GM10248 (cell line): ENCODE measurements at regions of chr16 and their contacts with region 1.

Region 1: GRCh38 chr16:67521095-67521804 is 7.4 kb upstream of the RIPOR1 start:
- DNase-seq: peak; percentile 91
- CTCF ChIP-seq: peak; percentile 99

Region 2: DNA sequence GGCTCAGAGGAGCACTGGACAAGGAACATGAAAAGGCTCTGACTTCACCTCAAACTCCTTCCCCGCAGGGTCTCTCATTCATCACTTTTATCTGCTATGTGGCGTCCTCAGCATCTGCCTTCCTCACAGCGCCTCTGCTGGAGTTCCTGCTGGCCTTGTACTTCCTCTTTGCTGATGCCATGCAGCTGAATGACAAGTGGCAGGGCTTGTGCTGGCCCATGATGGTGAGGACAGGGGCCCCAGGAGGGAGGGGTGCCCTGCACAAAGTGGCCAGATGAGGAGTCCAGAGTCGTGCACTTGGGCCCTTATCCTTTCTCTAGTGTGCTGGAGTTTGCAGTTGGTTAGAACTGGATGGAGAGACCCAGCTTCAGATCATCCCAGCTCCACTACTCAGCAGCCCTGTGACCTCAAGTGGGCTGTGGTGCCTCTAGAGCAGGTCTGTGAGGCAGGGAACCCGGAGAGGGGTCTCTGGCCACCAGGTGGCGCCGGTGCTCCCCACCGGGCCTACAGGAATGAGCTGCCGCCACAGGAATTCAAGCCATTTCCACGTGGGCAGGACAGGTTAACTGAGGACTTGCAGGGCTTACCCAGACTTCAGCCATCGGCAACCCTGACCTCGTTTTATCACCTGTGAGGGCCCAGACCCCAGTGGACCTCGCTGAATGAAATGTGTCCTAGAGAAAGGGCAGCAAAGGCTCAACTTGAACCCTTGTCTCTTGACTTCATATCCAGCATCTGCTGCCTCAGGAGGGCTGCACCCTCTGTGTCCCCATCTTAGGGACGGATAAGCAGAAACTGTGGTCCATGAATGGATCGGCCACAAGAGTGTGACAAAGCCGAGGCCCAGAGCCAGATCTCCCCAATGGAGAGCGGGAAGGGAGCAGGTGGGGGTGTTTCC is 912.8 kb before region 1 on chr16:
- CTCF ChIA-PET with region 1: no interaction called
- POLR2A ChIA-PET with region 1: no interaction called
- DNase-seq: peak; percentile 90
- CTCF ChIP-seq: peak; percentile 86

Region 3: GRCh38 chr16:67291461-67291860 is 229.8 kb before region 1 on chr16:
- CTCF ChIA-PET with region 1: no interaction called
- POLR2A ChIA-PET with region 1: no interaction called
- DNase-seq: no peak
- CTCF ChIP-seq: no peak

Region 4: DNA sequence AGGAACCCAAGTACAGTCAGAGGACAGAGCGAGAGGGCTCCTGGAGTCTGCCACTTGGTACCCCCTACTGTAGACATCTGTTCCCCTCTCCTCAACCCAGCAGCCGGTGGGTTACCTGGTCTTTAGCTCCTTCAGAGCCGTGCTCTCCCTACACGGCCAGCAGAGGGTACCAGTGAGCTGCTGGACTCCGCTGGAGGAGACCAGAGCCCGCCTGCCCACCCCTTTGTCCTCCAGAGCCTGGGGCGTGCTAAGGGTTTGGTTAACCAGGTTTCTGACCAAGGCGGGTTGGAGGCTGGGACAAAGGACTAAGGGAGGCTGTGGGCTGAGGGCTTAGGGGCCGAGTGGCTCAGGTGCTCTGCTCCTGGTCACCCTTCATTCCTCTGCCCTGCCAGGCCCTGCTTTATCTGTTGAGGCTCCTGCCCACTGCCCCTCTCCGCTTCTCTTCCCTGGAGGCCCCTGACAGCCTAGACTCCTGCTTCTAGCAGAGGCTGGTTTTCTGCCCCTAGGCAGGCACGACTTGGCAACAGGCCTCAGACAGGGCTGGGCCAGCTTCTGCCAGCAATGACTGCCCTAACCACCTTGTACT is 93.0 kb before region 1 on chr16:
- CTCF ChIA-PET with region 1: interaction called, 12 read pairs
- POLR2A ChIA-PET with region 1: no interaction called
- DNase-seq: peak; percentile 83
- CTCF ChIP-seq: peak; percentile 93

Region 5: DNA sequence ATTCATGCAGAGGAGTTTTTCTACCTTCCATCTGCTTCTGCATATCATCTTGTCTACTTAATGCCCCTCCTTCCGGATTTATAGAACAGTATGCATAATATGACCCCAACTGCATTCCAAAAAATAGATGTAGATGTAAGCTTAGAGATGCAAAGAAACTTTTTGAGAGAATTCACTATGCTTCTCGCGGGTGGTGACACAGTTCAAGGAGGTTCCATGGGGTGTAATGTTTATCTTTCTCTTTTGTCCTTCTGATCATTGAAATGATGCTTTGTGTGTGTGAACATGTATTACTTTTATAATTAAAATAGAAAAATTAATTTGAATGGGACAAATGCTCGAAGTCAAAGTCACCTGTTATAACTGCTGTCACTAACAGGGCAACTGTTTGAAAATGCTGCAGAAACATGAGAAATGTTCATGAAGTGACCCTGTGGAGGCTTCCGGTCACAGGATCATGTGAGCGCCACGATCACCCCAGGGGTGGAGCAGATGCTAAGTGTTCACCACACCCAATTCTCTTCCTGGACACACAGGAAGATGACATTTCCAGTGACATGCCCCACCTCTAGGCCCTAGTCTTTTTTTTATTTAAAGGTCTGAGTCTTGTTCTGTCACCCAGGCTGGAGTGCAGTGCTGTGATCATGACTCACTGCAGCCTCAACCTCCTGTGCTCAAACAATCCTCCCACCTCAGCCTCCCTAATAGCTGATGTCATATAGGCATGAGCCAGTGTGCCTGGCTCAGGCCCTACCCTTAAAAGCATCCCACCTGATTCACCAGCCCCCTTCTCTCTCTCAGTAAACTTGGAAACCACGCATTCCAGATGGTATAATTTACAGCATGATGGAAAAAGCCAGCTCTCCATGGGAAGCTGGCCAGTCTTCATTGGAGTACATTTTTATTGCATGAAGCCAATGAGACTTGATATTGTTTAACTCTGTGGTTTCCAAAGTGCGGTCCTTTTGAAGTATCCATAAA is 16.9 kb before region 1 on chr16:
- CTCF ChIA-PET with region 1: interaction called, 238 read pairs
- POLR2A ChIA-PET with region 1: no interaction called
- DNase-seq: peak; percentile 61
- CTCF ChIP-seq: no peak

Region 6: DNA sequence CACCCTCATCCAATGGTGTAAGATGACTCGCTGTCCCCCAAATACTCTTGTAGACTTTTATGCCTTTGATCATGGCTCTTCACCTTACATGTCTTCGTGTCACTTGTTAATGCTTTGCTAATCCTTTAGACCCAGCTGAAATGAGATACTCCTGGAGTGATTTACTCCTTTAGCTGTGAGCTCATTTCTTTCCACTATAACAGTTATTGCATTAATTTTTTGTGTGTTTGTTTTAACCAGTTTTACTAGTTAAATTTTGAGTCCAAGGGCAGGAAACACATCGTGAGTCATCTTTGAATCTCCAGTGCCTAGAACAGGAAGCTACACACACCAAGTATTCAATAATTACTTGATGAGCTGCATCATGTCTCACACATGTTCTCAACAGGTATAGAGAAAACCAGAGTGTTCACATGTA is 34.6 kb after region 1 on chr16:
- CTCF ChIA-PET with region 1: interaction called, 74 read pairs
- POLR2A ChIA-PET with region 1: no interaction called
- DNase-seq: no peak
- CTCF ChIP-seq: no peak

Region 7: GRCh38 chr16:67641779-67642708 is 120.8 kb after region 1 on chr16:
- CTCF ChIA-PET with region 1: interaction called, 121 read pairs
- POLR2A ChIA-PET with region 1: no interaction called
- DNase-seq: no peak
- CTCF ChIP-seq: no peak

Region 8: GRCh38 chr16:67672739-67673662 is 151.8 kb after region 1 on chr16:
- CTCF ChIA-PET with region 1: interaction called, 357 read pairs
- POLR2A ChIA-PET with region 1: no interaction called
- DNase-seq: peak; percentile 84
- CTCF ChIP-seq: peak; percentile 80